ENCODE measurements at regions of chr18 and their contacts with region 1.

Region 1: GRCh38 chr18:76492669-76493212 is 2.3 kb downstream of the ZNF516 start:
- DNase-seq: peak; percentile 97
- H3K4me3 Mint-ChIP-seq: peak overlapping the region; percentile 95
- H3K27ac Mint-ChIP-seq: peak overlapping the region; percentile 67
- H3K4me1 Mint-ChIP-seq: peaks cover 34% of the 10 kb centered on the region
- H3K27me3 Mint-ChIP-seq: peaks cover 70% of the 10 kb centered on the region

Region 2: DNA sequence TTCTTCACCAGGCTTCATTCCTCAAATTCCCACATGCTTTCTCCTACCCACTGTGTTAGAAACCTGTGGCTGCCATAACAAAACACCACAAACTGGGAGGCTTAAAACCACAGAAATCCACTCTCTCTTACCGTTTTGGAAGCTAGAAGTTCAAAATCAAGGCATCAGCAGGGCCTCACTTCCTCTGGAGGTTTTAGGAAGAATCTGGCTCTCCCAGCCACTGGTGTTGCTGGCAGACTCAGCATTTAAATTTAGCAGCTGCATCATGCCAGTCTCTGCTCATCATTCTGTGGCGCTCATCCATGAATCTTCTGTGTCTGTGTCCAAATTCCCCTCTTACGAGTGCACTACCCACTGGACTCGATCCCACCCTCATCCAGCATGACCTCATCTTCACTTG is 246.2 kb before region 1 on chr18:
- intact Hi-C with region 1: no loop called
- DNase-seq: no peak
- H3K4me3 Mint-ChIP-seq: no peak overlapping the region
- H3K27ac Mint-ChIP-seq: no peak overlapping the region
- H3K4me1 Mint-ChIP-seq: no peaks in the 10 kb centered on the region
- H3K27me3 Mint-ChIP-seq: peaks cover 2% of the 10 kb centered on the region

Region 3: GRCh38 chr18:76410660-76411417 is 81.9 kb before region 1 on chr18:
- intact Hi-C with region 1: loop called (anchors 5 kb)
- DNase-seq: no peak
- H3K4me3 Mint-ChIP-seq: no peak overlapping the region
- H3K27ac Mint-ChIP-seq: no peak overlapping the region
- H3K4me1 Mint-ChIP-seq: peaks cover 11% of the 10 kb centered on the region
- H3K27me3 Mint-ChIP-seq: peaks cover 5% of the 10 kb centered on the region

Region 4: GRCh38 chr18:76450452-76451395 is 42.0 kb before region 1 on chr18:
- intact Hi-C with region 1: loop called (anchors 5 kb)
- DNase-seq: peak; percentile 7
- H3K4me3 Mint-ChIP-seq: peak overlapping the region; percentile 63
- H3K27ac Mint-ChIP-seq: no peak overlapping the region
- H3K4me1 Mint-ChIP-seq: peaks cover 15% of the 10 kb centered on the region
- H3K27me3 Mint-ChIP-seq: peaks cover 39% of the 10 kb centered on the region

Region 5: GRCh38 chr18:76475452-76476194 is 17.1 kb before region 1 on chr18:
- intact Hi-C with region 1: loop called (anchors 2 kb)
- DNase-seq: no peak
- H3K4me3 Mint-ChIP-seq: no peak overlapping the region
- H3K27ac Mint-ChIP-seq: no peak overlapping the region
- H3K4me1 Mint-ChIP-seq: peaks cover 4% of the 10 kb centered on the region
- H3K27me3 Mint-ChIP-seq: peaks cover 24% of the 10 kb centered on the region

Region 6: DNA sequence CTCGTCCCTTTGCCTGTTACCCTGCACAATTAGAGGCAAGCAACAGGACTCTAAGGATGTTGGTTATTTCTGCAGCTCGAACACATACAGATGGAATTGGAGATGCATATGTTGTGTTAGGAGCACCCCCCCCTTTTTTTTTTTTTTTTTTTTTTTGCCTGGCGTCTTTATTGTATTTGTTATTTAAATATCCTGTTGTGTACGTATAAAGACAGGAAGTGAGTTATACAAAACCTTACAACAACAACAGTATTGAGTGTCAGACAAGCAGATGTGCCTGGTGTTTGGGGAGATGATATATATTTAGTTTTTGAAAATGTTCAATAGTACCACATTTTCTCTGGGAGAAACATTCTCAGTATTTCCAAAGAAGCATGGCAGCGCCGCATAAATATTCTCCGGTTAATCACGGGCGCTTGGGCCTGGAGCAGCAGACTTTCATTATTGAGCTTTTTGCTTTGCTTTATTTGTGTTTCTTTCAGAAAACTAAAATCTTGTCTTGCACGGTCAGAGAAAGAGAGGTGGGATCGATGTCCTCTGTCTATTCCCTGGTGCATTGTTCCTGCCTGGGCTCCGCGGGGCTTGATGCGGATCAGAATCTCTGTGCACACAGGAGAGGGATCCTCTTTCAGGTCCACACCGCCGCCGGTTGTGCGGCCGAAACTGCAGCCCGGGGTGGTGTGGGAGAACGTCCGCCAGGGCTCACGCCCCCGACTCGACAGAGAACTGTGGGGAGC is 25.6 kb after region 1 on chr18:
- intact Hi-C with region 1: loop called (anchors 2 kb)
- DNase-seq: no peak
- H3K4me3 Mint-ChIP-seq: no peak overlapping the region
- H3K27ac Mint-ChIP-seq: no peak overlapping the region
- H3K4me1 Mint-ChIP-seq: peaks cover 4% of the 10 kb centered on the region
- H3K27me3 Mint-ChIP-seq: peaks cover 43% of the 10 kb centered on the region

Region 7: DNA sequence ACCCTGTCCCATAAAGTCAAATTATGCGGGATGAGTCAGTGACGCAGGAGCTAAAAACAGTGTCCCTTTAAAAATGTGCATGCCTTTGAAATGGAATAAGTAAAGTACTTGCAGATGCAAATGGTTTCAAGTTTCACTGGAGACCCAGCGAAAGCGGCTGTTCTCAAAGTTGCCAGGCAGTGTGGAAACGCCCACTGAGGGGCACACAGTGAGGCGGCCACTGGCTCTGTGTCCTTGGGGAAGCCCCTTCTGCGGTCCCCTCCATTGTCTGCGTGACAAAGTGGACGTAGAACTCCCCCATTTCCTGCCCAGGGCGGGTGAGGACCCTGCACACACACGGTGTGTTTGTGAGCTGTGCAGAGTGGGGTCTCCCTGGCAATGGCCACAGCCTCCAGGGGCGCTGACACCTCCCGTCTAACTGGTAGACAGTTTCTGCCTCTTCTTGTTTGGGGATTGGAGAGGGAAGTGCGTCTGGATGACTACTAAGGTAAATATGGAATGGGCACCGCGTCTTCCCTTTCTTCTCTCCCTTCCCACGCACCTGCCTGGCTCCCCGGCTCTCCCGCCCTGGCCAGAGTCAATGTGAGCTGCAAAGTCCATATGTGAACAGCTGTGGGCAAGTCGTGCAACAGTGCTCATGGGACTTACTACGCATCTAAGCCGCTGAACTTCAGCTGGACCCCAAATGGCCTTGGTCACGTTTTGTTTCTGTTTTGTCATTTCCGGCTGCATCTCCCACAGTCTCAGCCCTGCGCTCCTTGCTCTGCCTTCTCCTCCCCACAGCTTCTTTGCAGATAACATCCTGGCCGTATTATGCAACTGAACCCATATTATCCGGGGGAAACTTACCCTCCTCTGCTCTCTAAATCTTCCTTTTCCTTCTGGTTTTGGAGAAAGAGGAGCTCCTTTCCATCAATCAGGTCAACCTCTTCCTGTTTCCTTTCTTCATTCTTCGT is 36.0 kb after region 1 on chr18:
- intact Hi-C with region 1: no loop called
- DNase-seq: no peak
- H3K4me3 Mint-ChIP-seq: peak overlapping the region; percentile 33
- H3K27ac Mint-ChIP-seq: no peak overlapping the region
- H3K4me1 Mint-ChIP-seq: peaks cover 8% of the 10 kb centered on the region
- H3K27me3 Mint-ChIP-seq: peaks cover 23% of the 10 kb centered on the region

Region 8: DNA sequence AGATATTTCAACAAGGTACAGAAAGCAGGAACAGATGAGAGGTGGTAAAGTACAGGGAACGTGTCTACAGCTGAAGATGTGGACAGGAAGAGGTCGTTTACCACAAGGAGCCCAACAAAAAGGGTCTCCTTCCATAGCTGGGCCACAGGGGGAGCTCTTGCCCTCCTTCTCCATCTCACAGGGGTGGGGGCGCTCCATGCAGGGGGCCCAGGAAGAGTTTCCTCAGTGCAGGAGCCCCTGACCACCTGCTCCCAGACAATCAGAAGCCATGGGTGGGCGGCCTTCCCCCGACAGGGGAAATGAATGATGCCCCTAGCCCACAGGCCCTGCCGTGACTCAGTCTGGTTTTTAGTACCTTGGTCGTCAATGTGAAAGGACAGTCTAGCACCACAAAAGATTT is 165.9 kb after region 1 on chr18:
- intact Hi-C with region 1: loop called (anchors 2 kb)
- DNase-seq: no peak
- H3K4me3 Mint-ChIP-seq: no peak overlapping the region
- H3K27ac Mint-ChIP-seq: no peak overlapping the region
- H3K4me1 Mint-ChIP-seq: peaks cover 21% of the 10 kb centered on the region
- H3K27me3 Mint-ChIP-seq: peaks cover 53% of the 10 kb centered on the region

Region 9: GRCh38 chr18:76721207-76721996 is 228.7 kb after region 1 on chr18:
- intact Hi-C with region 1: loop called (anchors 5 kb)
- DNase-seq: peak; percentile 83
- H3K4me3 Mint-ChIP-seq: peak overlapping the region; percentile 53
- H3K27ac Mint-ChIP-seq: peak overlapping the region; percentile 83
- H3K4me1 Mint-ChIP-seq: peaks cover 42% of the 10 kb centered on the region
- H3K27me3 Mint-ChIP-seq: peaks cover 3% of the 10 kb centered on the region